ENCODE measurements at regions of chr11 and their contacts with region 1.

Region 1: GRCh38 chr11:72585762-72586311 is 88.4 kb downstream of the PDE2A start:
- DNase-seq: peak; percentile 70
- ATAC-seq: peak; percentile 71
- H3K4me3 Mint-ChIP-seq: no peak overlapping the region
- H3K27ac Mint-ChIP-seq: no peak overlapping the region
- H3K4me1 Mint-ChIP-seq: peaks cover 41% of the 10 kb centered on the region
- H3K27me3 Mint-ChIP-seq: peaks cover 37% of the 10 kb centered on the region

Region 2: GRCh38 chr11:72471005-72471898 is 114.6 kb before region 1 on chr11:
- CTCF ChIA-PET with region 1: interaction called, 23 read pairs
- DNase-seq: peak; percentile 72
- ATAC-seq: peak; percentile 88
- H3K4me3 Mint-ChIP-seq: peak overlapping the region; percentile 24
- H3K27ac Mint-ChIP-seq: no peak overlapping the region
- H3K4me1 Mint-ChIP-seq: peaks cover 7% of the 10 kb centered on the region
- H3K27me3 Mint-ChIP-seq: peaks cover 58% of the 10 kb centered on the region

Region 3: DNA sequence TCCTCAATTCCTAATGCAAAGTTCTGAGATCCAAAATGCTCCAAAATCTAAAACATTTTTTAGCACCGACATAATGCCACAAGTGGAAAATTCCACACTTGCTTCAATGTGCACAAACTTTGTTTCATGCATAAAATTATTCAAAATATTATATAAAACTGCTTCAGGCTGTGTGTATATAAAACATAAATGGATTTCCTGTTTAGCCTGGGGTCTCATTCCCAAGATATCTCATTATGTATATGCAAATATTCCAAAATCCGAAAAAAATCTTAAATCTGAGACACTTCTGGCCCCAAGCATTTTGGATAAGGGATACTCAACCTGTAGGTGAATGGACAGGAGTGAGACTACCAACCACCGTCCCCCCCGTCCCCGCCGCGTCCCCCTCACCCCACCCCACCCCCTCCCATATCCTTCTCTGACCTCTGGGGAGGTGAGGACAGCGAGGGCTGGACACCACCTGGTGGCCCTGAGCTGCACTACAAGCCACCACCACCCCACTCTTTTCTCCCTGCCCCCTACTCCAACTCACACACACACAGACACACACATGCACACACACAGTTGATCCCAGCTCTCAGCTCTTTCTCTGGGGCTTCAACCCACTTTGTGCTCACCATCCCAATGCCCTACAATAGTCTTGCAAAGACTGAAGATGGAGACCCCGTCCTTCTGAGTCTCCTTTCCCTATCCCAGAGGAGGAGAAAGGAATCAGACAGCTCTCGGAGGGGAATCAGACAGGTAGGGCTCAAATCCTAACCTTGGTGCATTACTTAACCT is 12.6 kb before region 1 on chr11:
- CTCF ChIA-PET with region 1: interaction called, 17 read pairs
- DNase-seq: peak; percentile 52
- ATAC-seq: peak; percentile 77
- H3K4me3 Mint-ChIP-seq: no peak overlapping the region
- H3K27ac Mint-ChIP-seq: no peak overlapping the region
- H3K4me1 Mint-ChIP-seq: peaks cover 22% of the 10 kb centered on the region
- H3K27me3 Mint-ChIP-seq: peaks cover 10% of the 10 kb centered on the region

Region 4: GRCh38 chr11:72609045-72609444 is 23.2 kb after region 1 on chr11:
- CTCF ChIA-PET with region 1: interaction called, 112 read pairs
- DNase-seq: no peak
- ATAC-seq: peak; percentile 64
- H3K4me3 Mint-ChIP-seq: no peak overlapping the region
- H3K27ac Mint-ChIP-seq: no peak overlapping the region
- H3K4me1 Mint-ChIP-seq: peaks cover 12% of the 10 kb centered on the region
- H3K27me3 Mint-ChIP-seq: peaks cover 50% of the 10 kb centered on the region

Region 5: GRCh38 chr11:72642884-72643511 is 57.2 kb after region 1 on chr11:
- CTCF ChIA-PET with region 1: interaction called, 158 read pairs
- DNase-seq: peak; percentile 72
- ATAC-seq: peak; percentile 85
- H3K4me3 Mint-ChIP-seq: no peak overlapping the region
- H3K27ac Mint-ChIP-seq: no peak overlapping the region
- H3K4me1 Mint-ChIP-seq: peaks cover 2% of the 10 kb centered on the region
- H3K27me3 Mint-ChIP-seq: peaks cover 6% of the 10 kb centered on the region

Region 6: GRCh38 chr11:72683782-72684200 is 98.0 kb after region 1 on chr11:
- CTCF ChIA-PET with region 1: interaction called, 203 read pairs
- DNase-seq: peak; percentile 78
- ATAC-seq: peak; percentile 70
- H3K4me3 Mint-ChIP-seq: no peak overlapping the region
- H3K27ac Mint-ChIP-seq: no peak overlapping the region
- H3K4me1 Mint-ChIP-seq: peaks cover 45% of the 10 kb centered on the region
- H3K27me3 Mint-ChIP-seq: peaks cover 11% of the 10 kb centered on the region

Region 7: GRCh38 chr11:72989727-72990126 is 403.9 kb after region 1 on chr11:
- CTCF ChIA-PET with region 1: no interaction called
- DNase-seq: no peak
- ATAC-seq: no peak
- H3K4me3 Mint-ChIP-seq: no peak overlapping the region
- H3K27ac Mint-ChIP-seq: no peak overlapping the region
- H3K4me1 Mint-ChIP-seq: peaks cover 8% of the 10 kb centered on the region
- H3K27me3 Mint-ChIP-seq: no peaks in the 10 kb centered on the region

Measured in activated CD8-positive, alpha-beta memory T cell treated with anti-CD3 and anti-CD28 coated beads, Interleukin-2, amount 10 ng/mL, durations not matched to agents 7 days and 5 days (primary cell).